ENCODE measurements at regions of chr4 and their contacts with region 1.

Region 1: DNA sequence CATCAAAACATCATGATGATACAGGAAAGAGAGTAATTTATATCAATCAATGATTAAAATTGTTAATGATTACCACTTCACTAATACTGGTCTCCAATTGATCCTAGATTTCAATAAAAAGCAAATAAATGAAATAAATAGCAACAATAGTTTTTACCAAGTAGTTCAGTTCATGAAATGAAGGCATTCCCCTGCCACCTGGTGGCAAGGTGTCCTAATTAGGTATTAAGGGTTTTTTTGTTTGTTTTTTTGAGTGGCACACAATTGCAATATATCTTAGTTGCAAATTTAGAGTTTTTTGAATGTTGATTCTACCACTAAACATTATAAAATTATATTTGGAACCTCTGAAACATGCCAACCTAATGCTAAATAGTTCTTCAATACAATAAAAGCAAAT is 157.4 kb upstream of the PDE5A start:
- DNase-seq: peak; percentile 5
- H3K4me3 ChIP-seq: no peak overlapping the region
- H3K27ac ChIP-seq: no peak overlapping the region
- H3K4me1 ChIP-seq: no peaks in the 10 kb centered on the region
- H3K27me3 ChIP-seq: no peaks in the 10 kb centered on the region
- CTCF ChIP-seq: peak; percentile 20 to 59

Region 2: DNA sequence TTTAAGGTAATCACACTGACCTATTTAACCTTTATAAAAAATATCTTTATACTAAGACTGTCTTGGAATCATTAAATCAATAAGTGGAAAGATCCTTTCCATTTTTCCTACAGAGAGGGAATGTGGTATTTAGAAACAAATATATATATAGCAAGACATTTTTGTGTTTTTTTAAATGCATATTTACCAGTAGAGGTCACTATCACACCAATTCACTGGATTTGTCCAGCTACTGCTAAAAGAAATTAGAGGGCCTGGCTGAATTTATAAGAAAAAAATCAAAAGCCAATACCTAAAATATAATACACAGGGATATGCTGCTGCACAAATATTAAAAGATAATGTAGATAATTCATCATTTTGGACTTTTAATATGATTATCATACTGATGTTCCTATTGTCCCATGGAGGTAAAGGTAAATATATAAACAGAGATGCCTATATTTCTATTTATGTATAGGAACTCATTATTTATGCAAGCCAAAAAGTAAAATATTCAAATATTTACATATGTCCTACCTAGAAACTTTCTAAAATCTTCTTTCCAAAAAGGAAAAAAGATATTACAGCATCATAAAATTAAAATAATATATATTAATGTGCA is 226.8 kb before region 1 on chr4:
- CTCF ChIA-PET with region 1: no interaction called
- dilution Hi-C with region 1: no loop called
- in situ Hi-C with region 1: no loop called
- intact Hi-C with region 1: loop called (anchors 2 kb)
- DNase-seq: peak; percentile 19
- H3K4me3 ChIP-seq: no peak overlapping the region
- H3K27ac ChIP-seq: no peak overlapping the region
- H3K4me1 ChIP-seq: no peaks in the 10 kb centered on the region
- H3K27me3 ChIP-seq: no peaks in the 10 kb centered on the region
- CTCF ChIP-seq: peak; percentile 22 to 52

Region 3: GRCh38 chr4:119659616-119660015 is 126.3 kb before region 1 on chr4:
- CTCF ChIA-PET with region 1: no interaction called
- dilution Hi-C with region 1: no loop called
- in situ Hi-C with region 1: no loop called
- intact Hi-C with region 1: no loop called
- DNase-seq: no peak
- H3K4me3 ChIP-seq: no peak overlapping the region
- H3K27ac ChIP-seq: no peak overlapping the region
- H3K4me1 ChIP-seq: peaks cover 8% of the 10 kb centered on the region
- H3K27me3 ChIP-seq: no peaks in the 10 kb centered on the region
- CTCF ChIP-seq: no peak

Region 4: GRCh38 chr4:119692001-119692400 is 94.0 kb before region 1 on chr4:
- CTCF ChIA-PET with region 1: interaction called, 3 read pairs
- dilution Hi-C with region 1: no loop called
- in situ Hi-C with region 1: no loop called
- intact Hi-C with region 1: loop called (anchors 1 kb)
- DNase-seq: peak; percentile 3
- H3K4me3 ChIP-seq: no peak overlapping the region
- H3K27ac ChIP-seq: no peak overlapping the region
- H3K4me1 ChIP-seq: no peaks in the 10 kb centered on the region
- H3K27me3 ChIP-seq: no peaks in the 10 kb centered on the region
- CTCF ChIP-seq: peak in 1 of 2 donors; percentile 42

Region 5: DNA sequence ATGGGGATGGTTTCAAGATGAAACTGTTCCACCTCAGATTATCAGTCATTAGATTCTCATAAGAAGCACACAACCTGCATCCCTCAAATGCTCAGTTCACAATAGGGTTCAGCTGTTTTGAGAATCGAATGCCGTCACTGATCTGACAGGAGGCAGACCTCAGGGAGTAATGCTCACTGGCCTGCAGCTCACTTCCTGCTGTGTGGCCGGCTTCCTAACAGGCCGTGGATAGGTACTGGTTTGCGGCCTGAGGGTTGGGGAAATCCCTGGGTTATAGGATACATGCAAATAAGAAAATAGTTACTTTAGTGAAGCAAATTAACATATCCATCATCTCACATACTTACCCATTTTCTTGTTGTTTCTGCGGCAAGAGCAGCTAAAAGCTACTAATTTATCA is 120.3 kb after region 1 on chr4:
- CTCF ChIA-PET with region 1: no interaction called
- dilution Hi-C with region 1: no loop called
- in situ Hi-C with region 1: no loop called
- intact Hi-C with region 1: no loop called
- DNase-seq: no peak
- H3K4me3 ChIP-seq: no peak overlapping the region
- H3K27ac ChIP-seq: no peak overlapping the region
- H3K4me1 ChIP-seq: no peaks in the 10 kb centered on the region
- H3K27me3 ChIP-seq: no peaks in the 10 kb centered on the region
- CTCF ChIP-seq: no peak

Measured in mammary epithelial cell (primary cell).